ENCODE measurements at regions of chr14 and their contacts with region 1.

Region 1: DNA sequence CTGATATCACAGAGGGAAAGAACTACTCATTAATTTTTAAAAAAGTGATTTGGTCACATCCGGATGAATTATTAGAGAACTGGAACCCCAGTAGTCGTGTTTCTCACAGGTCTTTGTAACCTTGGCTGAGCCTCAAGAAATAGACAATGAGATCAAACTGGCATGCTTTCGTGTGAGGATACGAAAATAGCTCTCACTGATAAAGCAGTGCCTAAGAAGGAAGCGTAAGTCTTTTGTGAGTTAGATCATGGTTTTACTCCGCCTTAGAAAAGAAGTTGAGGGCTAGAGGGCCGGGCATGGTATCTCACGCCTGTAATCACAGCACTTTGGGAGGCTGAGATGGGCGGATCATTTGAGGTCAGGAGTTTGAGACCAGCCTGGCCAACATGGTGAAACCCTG is 33.8 kb upstream of the GALNT16 start:
- DNase-seq: no peak

Region 2: DNA sequence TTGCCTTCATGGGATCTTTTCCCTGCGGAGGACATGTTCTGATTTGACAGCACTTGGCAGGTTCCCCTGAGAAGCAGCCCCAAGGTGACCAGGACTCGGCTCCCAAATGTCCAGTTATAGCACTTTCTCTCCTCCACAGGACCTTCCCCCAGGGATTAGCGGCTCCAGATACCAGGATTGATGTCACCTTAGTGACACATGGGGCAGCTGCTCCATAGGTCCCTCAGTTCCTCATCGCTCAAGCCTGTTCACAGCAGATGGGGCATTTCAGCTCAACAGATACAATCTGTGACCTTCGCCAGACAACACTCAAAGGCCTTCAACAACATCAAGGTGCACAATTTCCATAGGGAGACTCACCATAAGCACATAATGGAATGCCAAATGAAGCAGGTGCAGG is 365.4 kb before region 1 on chr14:
- intact Hi-C with region 1: loop called in 1 of 2 experiments (anchors 2 kb)
- DNase-seq: no peak